BJ (cell line): ENCODE measurements at regions of chr12 and their contacts with region 1.

Region 1: GRCh38 chr12:114343585-114344302 is 62.2 kb downstream of the TBX5 start:
- DNase-seq: no peak
- H3K4me3 ChIP-seq: no peak overlapping the region
- H3K27me3 ChIP-seq: no peaks in the 10 kb centered on the region
- CTCF ChIP-seq: no peak

Region 2: GRCh38 chr12:115885038-115885690 is 1541.4 kb after region 1 on chr12:
- CTCF ChIA-PET with region 1: no interaction called
- POLR2A ChIA-PET with region 1: interaction called, 17 read pairs
- DNase-seq: no peak
- H3K4me3 ChIP-seq: no peak overlapping the region
- H3K27me3 ChIP-seq: peaks cover 2% of the 10 kb centered on the region
- CTCF ChIP-seq: no peak